ENCODE measurements at regions of chr7 and their contacts with region 1.

Region 1: GRCh38 chr7:116984917-116985316 is 31.6 kb downstream of the ST7 start:
- DNase-seq: no peak
- ATAC-seq: peak; percentile 75
- H3K4me3 ChIP-seq: no peak overlapping the region
- H3K27ac ChIP-seq: no peak overlapping the region
- H3K4me1 ChIP-seq: peaks cover 24% of the 10 kb centered on the region
- H3K27me3 ChIP-seq: no peaks in the 10 kb centered on the region
- CTCF ChIP-seq: peak; percentile 54 to 64 (median 59); a peak in 5 of 6 replicates
- EP300 ChIP-seq: no peak
- POLR2A ChIP-seq: no peak
- RAD21 ChIP-seq: peak; percentile 66

Region 2: DNA sequence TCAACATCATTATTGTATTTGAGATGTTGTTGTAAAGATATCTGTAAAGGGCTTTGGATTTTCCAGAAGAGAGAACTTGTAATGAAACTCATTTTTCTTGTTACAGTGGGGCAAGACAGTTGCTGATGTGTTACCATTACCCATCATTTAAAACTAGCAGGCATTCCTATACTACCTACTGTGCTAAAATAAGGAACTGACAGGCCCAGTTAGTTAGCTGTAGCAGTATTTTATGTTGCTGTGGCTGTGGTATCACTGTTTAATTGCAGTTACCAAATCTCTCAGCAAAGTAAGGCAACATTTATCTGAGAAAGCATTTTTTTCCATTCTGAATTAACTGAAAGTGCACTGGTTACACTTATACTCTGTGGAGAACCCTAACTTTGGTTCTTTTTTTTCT is 21.7 kb before region 1 on chr7:
- CTCF ChIA-PET with region 1: interaction called, 70 read pairs
- POLR2A ChIA-PET with region 1: interaction called, 6 read pairs
- RAD21 ChIA-PET with region 1: interaction called, 22 read pairs
- SMC1A ChIA-PET with region 1: interaction called, 8 read pairs
- in situ Hi-C with region 1: no loop called
- intact Hi-C with region 1: no loop called
- DNase-seq: no peak
- ATAC-seq: peak; percentile 75
- H3K4me3 ChIP-seq: no peak overlapping the region
- H3K27ac ChIP-seq: no peak overlapping the region
- H3K4me1 ChIP-seq: peaks cover 25% of the 10 kb centered on the region
- H3K27me3 ChIP-seq: no peaks in the 10 kb centered on the region
- CTCF ChIP-seq: no peak
- EP300 ChIP-seq: no peak
- POLR2A ChIP-seq: no peak
- RAD21 ChIP-seq: no peak

Region 3: GRCh38 chr7:117008883-117009531 is 24.1 kb after region 1 on chr7:
- CTCF ChIA-PET with region 1: interaction called, 287 read pairs
- POLR2A ChIA-PET with region 1: interaction called, 5 read pairs
- RAD21 ChIA-PET with region 1: interaction called, 112 read pairs
- SMC1A ChIA-PET with region 1: interaction called, 223 read pairs
- in situ Hi-C with region 1: no loop called
- intact Hi-C with region 1: loop called (anchors 1 kb)
- DNase-seq: no peak
- ATAC-seq: peak; percentile 9
- H3K4me3 ChIP-seq: 0 out of 2 replicates have a peak overlapping the region, but pooled peaks have one; percentile 9
- H3K27ac ChIP-seq: peak overlapping the region; percentile 100
- H3K4me1 ChIP-seq: peaks cover 46% of the 10 kb centered on the region
- H3K27me3 ChIP-seq: no peaks in the 10 kb centered on the region
- CTCF ChIP-seq: no peak
- EP300 ChIP-seq: peak in 1 of 2 experiments; percentile 50; a peak in 1 of 4 replicates
- POLR2A ChIP-seq: no peak
- RAD21 ChIP-seq: no peak

Region 4: DNA sequence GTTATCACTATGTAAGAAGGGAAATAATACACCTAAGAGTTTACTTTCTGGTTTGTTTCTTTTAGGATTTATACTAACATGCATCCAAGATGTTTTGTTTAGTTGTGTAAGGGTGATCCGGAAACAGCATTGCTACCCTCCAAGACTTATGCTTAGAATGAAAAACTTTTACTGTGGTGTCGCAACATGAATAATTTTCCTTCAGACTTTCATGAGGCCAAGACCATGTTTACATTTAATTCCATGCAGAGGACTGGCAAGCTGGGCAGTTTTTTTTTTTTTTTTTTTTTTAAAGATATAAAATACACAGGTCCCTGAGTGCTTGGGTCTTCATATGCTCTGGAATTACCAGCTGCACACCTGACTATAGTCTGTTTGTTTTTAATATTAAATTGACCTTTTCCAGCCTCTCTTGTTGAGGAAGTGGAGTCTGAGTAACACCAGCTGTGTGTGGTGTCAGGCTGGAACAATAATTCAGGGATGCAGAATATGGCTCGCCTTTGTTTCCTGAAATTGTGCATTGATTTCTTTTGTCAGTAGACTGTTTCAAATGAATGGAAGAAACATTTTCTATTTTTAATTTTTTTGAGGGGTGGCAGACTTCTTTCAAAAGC is 50.0 kb after region 1 on chr7:
- CTCF ChIA-PET with region 1: interaction called, 11 read pairs
- POLR2A ChIA-PET with region 1: no interaction called
- RAD21 ChIA-PET with region 1: interaction called, 5 read pairs
- SMC1A ChIA-PET with region 1: interaction called, 4 read pairs
- in situ Hi-C with region 1: no loop called
- intact Hi-C with region 1: no loop called
- DNase-seq: no peak
- ATAC-seq: no peak
- H3K4me3 ChIP-seq: no peak overlapping the region
- H3K27ac ChIP-seq: no peak overlapping the region
- H3K4me1 ChIP-seq: no peaks in the 10 kb centered on the region
- H3K27me3 ChIP-seq: no peaks in the 10 kb centered on the region
- CTCF ChIP-seq: no peak
- EP300 ChIP-seq: no peak
- POLR2A ChIP-seq: no peak
- RAD21 ChIP-seq: no peak

Region 5: GRCh38 chr7:117119192-117119924 is 134.4 kb after region 1 on chr7:
- CTCF ChIA-PET with region 1: interaction called, 827 read pairs
- POLR2A ChIA-PET with region 1: interaction called, 4 read pairs
- RAD21 ChIA-PET with region 1: interaction called, 379 read pairs
- SMC1A ChIA-PET with region 1: interaction called, 527 read pairs
- in situ Hi-C with region 1: loop called (anchors 5 kb)
- intact Hi-C with region 1: loop called (anchors 1 kb)
- DNase-seq: peak; percentile 33
- ATAC-seq: peak; percentile 75
- H3K4me3 ChIP-seq: no peak overlapping the region
- H3K27ac ChIP-seq: no peak overlapping the region
- H3K4me1 ChIP-seq: peaks cover 3% of the 10 kb centered on the region
- H3K27me3 ChIP-seq: no peaks in the 10 kb centered on the region
- CTCF ChIP-seq: peak; percentile 75 to 87 (median 83)
- EP300 ChIP-seq: no peak
- POLR2A ChIP-seq: no peak
- RAD21 ChIP-seq: peak; percentile 97

Region 6: DNA sequence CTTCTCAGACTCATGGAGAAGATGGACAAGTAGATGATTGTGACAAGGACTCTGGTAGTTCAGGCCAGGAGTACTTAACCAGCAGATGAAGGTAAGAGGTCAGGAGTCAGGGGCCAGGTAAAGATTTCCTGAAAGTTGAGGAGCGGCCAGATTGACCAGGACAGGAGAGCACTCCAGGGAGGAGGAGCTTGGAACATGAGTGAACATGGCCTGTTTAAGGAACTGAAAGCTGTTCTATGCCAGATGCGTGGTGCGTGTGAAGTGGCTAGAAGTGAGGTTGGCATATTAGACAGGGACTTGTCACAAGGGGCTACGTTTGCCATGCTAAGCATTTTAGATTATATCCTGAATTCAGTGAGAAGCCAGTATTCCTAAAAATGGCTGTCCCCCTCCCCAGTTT is 180.7 kb after region 1 on chr7:
- CTCF ChIA-PET with region 1: no interaction called
- POLR2A ChIA-PET with region 1: no interaction called
- RAD21 ChIA-PET with region 1: no interaction called
- SMC1A ChIA-PET with region 1: no interaction called
- in situ Hi-C with region 1: no loop called
- intact Hi-C with region 1: no loop called
- DNase-seq: no peak
- ATAC-seq: peak; percentile 81
- H3K4me3 ChIP-seq: no peak overlapping the region
- H3K27ac ChIP-seq: no peak overlapping the region
- H3K4me1 ChIP-seq: no peaks in the 10 kb centered on the region
- H3K27me3 ChIP-seq: no peaks in the 10 kb centered on the region
- CTCF ChIP-seq: no peak
- EP300 ChIP-seq: no peak
- POLR2A ChIP-seq: no peak
- RAD21 ChIP-seq: no peak

Region 7: GRCh38 chr7:117385340-117386109 is 400.6 kb after region 1 on chr7:
- CTCF ChIA-PET with region 1: interaction called, 11 read pairs
- POLR2A ChIA-PET with region 1: no interaction called
- RAD21 ChIA-PET with region 1: interaction called, 4 read pairs
- SMC1A ChIA-PET with region 1: interaction called, 3 read pairs
- in situ Hi-C with region 1: no loop called
- intact Hi-C with region 1: no loop called
- DNase-seq: no peak
- ATAC-seq: peak; percentile 90
- H3K4me3 ChIP-seq: no peak overlapping the region
- H3K27ac ChIP-seq: no peak overlapping the region
- H3K4me1 ChIP-seq: no peaks in the 10 kb centered on the region
- H3K27me3 ChIP-seq: no peaks in the 10 kb centered on the region
- CTCF ChIP-seq: peak; percentile 25 to 68 (median 46); a peak in 4 of 6 replicates
- EP300 ChIP-seq: no peak
- POLR2A ChIP-seq: no peak
- RAD21 ChIP-seq: peak; percentile 75

Region 8: DNA sequence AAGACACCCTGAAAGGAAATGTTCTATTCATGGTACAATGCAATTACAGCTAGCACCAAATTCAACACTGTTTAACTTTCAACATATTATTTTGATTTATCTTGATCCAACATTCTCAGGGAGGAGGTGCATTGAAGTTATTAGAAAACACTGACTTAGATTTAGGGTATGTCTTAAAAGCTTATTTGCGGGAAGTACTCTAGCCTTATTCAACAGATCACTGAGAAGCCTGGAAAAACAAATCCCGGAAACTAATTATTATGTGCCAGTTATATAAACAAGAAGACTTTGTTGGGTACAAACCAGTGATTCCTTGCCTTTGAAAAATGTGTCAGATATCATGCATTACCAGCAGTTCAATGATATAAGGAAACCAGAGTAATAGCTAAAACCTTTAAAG is 655.0 kb after region 1 on chr7:
- CTCF ChIA-PET with region 1: no interaction called
- POLR2A ChIA-PET with region 1: no interaction called
- RAD21 ChIA-PET with region 1: no interaction called
- SMC1A ChIA-PET with region 1: no interaction called
- in situ Hi-C with region 1: no loop called
- intact Hi-C with region 1: no loop called
- DNase-seq: no peak
- ATAC-seq: no peak
- H3K4me3 ChIP-seq: no peak overlapping the region
- H3K27ac ChIP-seq: no peak overlapping the region
- H3K4me1 ChIP-seq: no peaks in the 10 kb centered on the region
- H3K27me3 ChIP-seq: no peaks in the 10 kb centered on the region
- CTCF ChIP-seq: no peak
- EP300 ChIP-seq: no peak
- POLR2A ChIP-seq: no peak
- RAD21 ChIP-seq: no peak

Measured in GM12878 (cell line).